ENCODE measurements at regions of chr1 and their contacts with region 1.

Region 1: DNA sequence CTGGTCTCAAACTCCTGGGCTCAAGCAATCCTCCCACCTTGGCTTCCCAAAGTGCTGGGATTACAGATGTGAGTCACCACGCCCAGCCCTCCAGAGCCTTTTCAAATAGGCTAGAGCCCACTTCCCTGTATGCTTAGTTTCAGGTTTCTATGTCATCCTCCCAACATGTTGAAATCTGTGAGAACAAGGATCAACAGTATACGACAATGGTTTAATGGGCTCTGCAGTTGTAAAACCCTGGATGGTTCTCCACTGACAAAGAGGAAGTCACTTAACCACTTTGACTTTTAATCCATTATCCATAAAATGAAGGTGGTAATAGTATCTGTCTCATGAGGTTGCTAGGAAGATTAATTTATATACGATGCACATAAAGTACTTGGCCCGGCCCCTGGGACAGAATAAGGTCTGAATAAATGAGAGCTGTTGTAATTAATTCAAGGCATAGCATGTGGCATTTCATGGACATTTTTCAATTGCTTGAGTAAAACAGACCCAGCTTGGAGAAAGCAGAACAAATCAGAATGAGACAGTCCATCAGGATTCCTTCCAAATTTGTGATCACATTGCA is 113.9 kb upstream of the ZNF648 start:
- DNase-seq: no peak
- ATAC-seq: peak; percentile 18 to 19
- H3K4me3 ChIP-seq: no peak overlapping the region
- H3K27ac ChIP-seq: peak overlapping the region; percentile 12 to 84 (median 78)
- H3K4me1 ChIP-seq: peaks cover 13 to 28% of the 10 kb centered on the region in 2 donors
- H3K27me3 ChIP-seq: no peaks in the 10 kb centered on the region
- CTCF ChIP-seq: no peak
- POLR2A ChIP-seq: no peak

Region 2: DNA sequence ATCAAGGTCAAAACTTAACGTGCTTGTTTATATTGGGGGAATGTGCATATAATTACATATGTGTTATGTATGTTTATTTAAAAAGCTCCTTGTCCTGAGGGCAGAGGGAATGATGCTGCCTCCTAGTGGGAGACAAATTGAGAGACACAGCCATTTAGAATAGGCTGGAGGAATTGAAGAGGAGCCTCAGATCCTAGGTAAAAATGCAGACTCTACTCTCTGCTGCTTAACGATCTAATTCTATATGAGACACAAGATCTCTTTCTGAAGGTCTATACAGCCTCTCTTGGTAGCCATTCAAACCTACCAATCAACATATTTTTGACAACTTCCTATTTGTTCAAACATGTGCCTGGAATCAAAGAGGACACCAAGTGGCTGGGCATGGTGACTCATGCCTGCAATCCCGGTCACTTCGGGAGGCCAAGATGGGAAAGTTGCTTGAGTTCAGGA is 22.6 kb after region 1 on chr1:
- in situ Hi-C with region 1: no loop called
- intact Hi-C with region 1: loop called (anchors 2 kb)
- DNase-seq: peak in 1 of 2 donors; percentile 36
- ATAC-seq: no peak
- H3K4me3 ChIP-seq: no peak overlapping the region
- H3K27ac ChIP-seq: peak overlapping the region; percentile 64 to 83 (median 74)
- H3K4me1 ChIP-seq: peaks cover 21 to 35% of the 10 kb centered on the region in 2 donors
- H3K27me3 ChIP-seq: no peaks in the 10 kb centered on the region
- CTCF ChIP-seq: peak in 3 of 5 experiments; percentile 19 to 36 (median 27)
- POLR2A ChIP-seq: no peak

Region 3: DNA sequence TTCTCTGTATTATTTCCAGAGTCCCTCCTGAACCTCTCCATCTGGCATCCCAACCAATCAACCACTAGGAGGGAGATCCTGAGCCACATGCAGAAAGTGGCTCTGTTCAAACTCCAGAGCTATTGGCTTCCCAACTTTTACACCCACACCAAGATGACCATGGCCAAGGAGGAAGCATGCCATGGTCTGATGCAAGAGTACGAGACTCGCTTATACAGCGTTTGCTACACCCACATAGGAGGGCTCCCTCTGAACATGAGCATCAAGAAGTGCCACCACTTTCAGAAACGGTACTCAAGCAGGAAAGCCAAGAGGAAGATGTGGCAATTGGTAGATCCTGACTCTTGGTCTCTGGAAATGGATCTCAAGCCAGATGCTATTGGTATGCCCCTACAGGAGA is 298.1 kb after region 1 on chr1:
- in situ Hi-C with region 1: no loop called
- intact Hi-C with region 1: no loop called
- DNase-seq: no peak
- ATAC-seq: no peak
- H3K4me3 ChIP-seq: no peak overlapping the region
- H3K27ac ChIP-seq: no peak overlapping the region
- H3K4me1 ChIP-seq: no peaks in the 10 kb centered on the region
- H3K27me3 ChIP-seq: no peaks in the 10 kb centered on the region
- CTCF ChIP-seq: no peak
- POLR2A ChIP-seq: no peak

Region 4: GRCh38 chr1:182877842-182878241 is 702.4 kb after region 1 on chr1:
- in situ Hi-C with region 1: no loop called
- intact Hi-C with region 1: no loop called
- DNase-seq: no peak
- ATAC-seq: no peak
- H3K4me3 ChIP-seq: no peak overlapping the region
- H3K27ac ChIP-seq: no peak overlapping the region
- H3K4me1 ChIP-seq: no peaks in the 10 kb centered on the region
- H3K27me3 ChIP-seq: no peaks in the 10 kb centered on the region
- CTCF ChIP-seq: no peak
- POLR2A ChIP-seq: no peak

Measured in gastrocnemius medialis (tissue), 4 donors.